K562 (cell line): ENCODE measurements at regions of chr1 and their contacts with region 1.

Region 1: GRCh38 chr1:3775490-3776230 is 3.1 kb downstream of the SMIM1 start:
- DNase-seq: peak; percentile 85 to 98 (median 91)
- ATAC-seq: peak; percentile 71
- H3K4me3 ChIP-seq: peak overlapping the region; percentile 7; the same call in 1 of the 2 replicates
- H3K27ac ChIP-seq: peak overlapping the region; percentile 66
- H3K4me1 ChIP-seq: peaks cover 26 to 87% of the 10 kb centered on the region in 2 experiments
- H3K27me3 ChIP-seq: no peaks in the 10 kb centered on the region
- CTCF ChIP-seq: peak; percentile 66 to 79 (median 69)
- EP300 ChIP-seq: no peak; the same call in 1 of the 2 replicates
- POLR2A ChIP-seq: peak; percentile 47; the same call in 1 of the 2 replicates
- RAD21 ChIP-seq: peak; percentile 15 to 66; a peak in 3 of 4 replicates

Region 2: GRCh38 chr1:3746830-3747521 is 28.7 kb before region 1 on chr1:
- CTCF ChIA-PET with region 1: no interaction called
- POLR2A ChIA-PET with region 1: no interaction called
- in situ Hi-C with region 1: no loop called
- intact Hi-C with region 1: loop called (anchors 2 kb)
- DNase-seq: peak; percentile 95 to 99 (median 98)
- ATAC-seq: peak; percentile 97
- H3K4me3 ChIP-seq: peak overlapping the region; percentile 72
- H3K27ac ChIP-seq: peak overlapping the region; percentile 47
- H3K4me1 ChIP-seq: peaks cover 35 to 58% of the 10 kb centered on the region in 2 experiments
- H3K27me3 ChIP-seq: no peaks in the 10 kb centered on the region
- CTCF ChIP-seq: no peak
- EP300 ChIP-seq: no peak
- POLR2A ChIP-seq: peak; percentile 80
- RAD21 ChIP-seq: no peak

Region 3: DNA sequence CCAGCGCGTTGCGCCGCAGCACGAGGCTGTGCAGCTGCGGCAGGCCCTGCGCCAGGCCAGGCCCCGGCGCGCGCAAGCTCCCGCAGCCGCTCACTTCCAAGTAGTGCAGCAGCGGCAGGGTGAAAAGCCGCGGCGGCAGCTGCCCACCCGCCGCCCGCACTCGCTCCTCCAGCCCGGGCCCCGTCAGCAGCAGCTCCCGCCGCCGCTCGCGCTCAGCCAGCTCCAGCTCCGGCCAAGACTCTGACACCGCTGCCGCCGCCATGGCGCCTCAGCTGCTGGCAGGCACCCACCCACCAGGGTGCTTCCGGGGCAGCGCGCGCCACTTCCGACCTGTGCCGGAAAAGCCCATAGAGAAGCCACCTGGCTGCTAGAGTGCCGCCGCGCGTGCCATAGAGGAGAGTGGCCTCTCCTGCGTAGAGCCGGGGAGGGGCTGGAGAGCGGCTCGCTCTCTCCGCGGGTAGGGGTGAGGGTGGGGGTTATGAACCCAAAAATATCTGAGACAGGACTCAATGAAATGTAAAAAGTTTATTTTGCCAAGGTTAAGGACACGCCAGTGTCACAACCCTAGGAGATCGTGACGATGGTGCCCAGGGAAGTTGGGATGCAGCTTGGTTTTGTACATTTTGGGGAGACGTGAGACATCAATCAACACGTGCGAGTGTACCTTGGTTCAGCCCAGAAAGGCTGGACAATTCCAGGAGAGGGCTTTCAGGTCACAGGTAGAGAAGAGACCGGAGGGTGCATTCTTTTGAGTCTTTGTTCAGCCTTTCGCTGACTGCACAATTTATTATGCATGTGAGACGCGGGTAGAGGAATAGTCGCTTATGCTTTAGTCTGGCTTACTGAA is 20.8 kb after region 1 on chr1 and contains the start of gene LRRC47:
- CTCF ChIA-PET with region 1: no interaction called
- POLR2A ChIA-PET with region 1: interaction called, 14 read pairs
- in situ Hi-C with region 1: no loop called
- intact Hi-C with region 1: no loop called
- DNase-seq: peak; percentile 95 to 98 (median 97)
- ATAC-seq: peak; percentile 98
- H3K4me3 ChIP-seq: peak within 1 kb of the TSS; percentile 82
- H3K27ac ChIP-seq: peak within 1 kb of the TSS; percentile 61
- H3K4me1 ChIP-seq: peaks cover 25 to 39% of the 10 kb centered on the region in 2 experiments
- H3K27me3 ChIP-seq: no peaks in the 10 kb centered on the region
- CTCF ChIP-seq: peak in 1 of 3 experiments; percentile 18; a peak in 1 of 6 replicates
- EP300 ChIP-seq: peak; percentile 68; the same call in 1 of the 2 replicates
- POLR2A ChIP-seq: peak; percentile 82
- RAD21 ChIP-seq: no peak
- polyA plus RNA-seq, gene LRRC47: 4.6 to 5.3 TPM

Region 4: DNA sequence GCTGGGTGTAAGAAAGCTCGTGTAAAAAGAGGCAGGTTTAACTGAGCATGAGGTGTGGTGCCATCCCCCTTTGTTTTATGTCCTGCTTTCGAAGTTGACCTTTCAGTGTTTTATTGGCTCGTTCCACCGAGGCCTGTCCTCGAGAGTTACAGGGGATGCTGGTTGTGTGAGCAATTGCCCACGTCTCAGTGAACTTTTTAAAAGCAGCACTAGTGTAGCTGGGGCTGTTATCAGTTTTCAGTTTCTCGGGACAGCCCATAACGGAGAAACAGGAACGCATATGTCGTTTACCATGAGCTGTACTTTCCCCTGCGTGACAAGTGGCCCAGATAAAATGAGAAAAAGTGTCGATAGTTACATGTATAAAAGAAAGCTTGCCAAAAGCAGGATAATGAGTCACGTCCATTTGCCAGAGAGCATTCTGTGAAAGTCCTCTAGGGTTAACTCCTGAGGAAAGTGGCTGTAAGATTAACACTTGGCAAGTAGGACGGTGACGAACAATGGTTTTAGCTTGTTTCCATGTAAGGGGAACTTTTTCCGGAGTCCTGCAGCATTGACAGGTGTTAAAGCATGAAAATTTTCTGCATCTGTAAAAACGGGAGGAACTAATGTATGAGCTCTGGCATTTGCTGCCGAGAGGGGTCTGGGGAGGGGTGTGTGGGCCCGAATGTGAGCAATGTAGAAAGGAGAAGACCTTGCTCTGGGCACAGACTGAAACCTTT is 28.4 kb after region 1 on chr1:
- CTCF ChIA-PET with region 1: no interaction called
- POLR2A ChIA-PET with region 1: interaction called, 3 read pairs
- in situ Hi-C with region 1: no loop called
- intact Hi-C with region 1: loop called (anchors 2 kb)
- DNase-seq: peak in 1 of 4 experiments; percentile 65
- ATAC-seq: peak; percentile 50
- H3K4me3 ChIP-seq: peak overlapping the region; percentile 6; the same call in 1 of the 2 replicates
- H3K27ac ChIP-seq: peak overlapping the region; percentile 76
- H3K4me1 ChIP-seq: peaks cover 13 to 32% of the 10 kb centered on the region in 2 experiments
- H3K27me3 ChIP-seq: no peaks in the 10 kb centered on the region
- CTCF ChIP-seq: no peak
- EP300 ChIP-seq: no peak
- POLR2A ChIP-seq: no peak
- RAD21 ChIP-seq: no peak

Region 5: DNA sequence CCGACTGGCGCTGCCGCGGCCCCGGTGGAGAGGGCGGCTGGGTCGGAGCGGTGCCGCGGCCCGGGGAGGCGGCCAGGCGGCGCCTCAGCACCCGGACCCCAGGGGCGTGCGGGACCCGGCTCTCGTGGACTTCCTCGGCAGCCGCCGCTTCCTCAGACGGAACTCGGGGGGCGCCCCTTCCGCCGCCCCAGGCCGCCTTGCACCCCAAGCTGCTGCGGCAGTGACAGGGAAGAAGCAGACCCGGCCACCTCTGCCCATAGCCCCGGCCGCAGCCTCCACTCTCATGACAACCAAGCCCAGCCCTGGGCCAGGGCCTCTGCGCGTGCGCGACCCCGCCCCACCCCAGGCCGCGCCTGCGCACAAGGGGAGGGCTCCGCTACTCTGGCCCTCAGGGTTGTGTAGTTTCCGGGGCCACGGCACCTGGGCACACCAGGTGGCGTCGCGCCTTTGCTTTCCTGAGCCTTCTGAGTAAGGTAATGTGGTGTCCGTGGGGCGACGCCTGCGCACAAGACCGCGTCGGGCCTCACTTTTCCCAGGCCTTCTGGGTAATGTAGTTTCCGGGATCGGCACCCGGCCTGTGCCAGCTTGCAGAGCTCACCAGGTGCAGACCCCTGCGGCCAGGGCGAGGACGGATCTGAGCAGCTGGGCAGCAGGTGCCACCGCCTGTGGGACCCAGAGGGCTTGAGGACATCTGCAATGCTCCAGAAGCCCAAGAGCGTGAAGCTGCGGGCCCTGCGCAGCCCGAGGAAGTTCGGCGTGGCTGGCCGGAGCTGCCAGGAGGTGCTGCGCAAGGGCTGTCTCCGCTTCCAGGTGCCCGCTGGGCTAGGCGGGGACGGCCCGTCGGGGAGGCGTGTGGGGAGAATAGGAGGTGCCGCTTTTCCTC is 81.5 kb after region 1 on chr1 and contains the starts of genes CEP104 and DFFB:
- CTCF ChIA-PET with region 1: no interaction called
- POLR2A ChIA-PET with region 1: no interaction called
- in situ Hi-C with region 1: no loop called
- intact Hi-C with region 1: loop called (anchors 5 kb)
- DNase-seq: peak; percentile 100
- ATAC-seq: peak; percentile 98
- H3K4me3 ChIP-seq: peak within 1 kb of the TSS; percentile 90
- H3K27ac ChIP-seq: peak within 1 kb of the TSS; percentile 68
- H3K4me1 ChIP-seq: peaks cover 10 to 37% of the 10 kb centered on the region in 2 experiments; a peak in 3 of 5 replicates
- H3K27me3 ChIP-seq: no peaks in the 10 kb centered on the region
- CTCF ChIP-seq: peak; percentile 72 to 91 (median 85)
- EP300 ChIP-seq: no peak
- POLR2A ChIP-seq: peak; percentile 79
- RAD21 ChIP-seq: peak; percentile 53 to 76
- polyA plus RNA-seq, gene CEP104: 11.2 to 13.4 TPM
- polyA plus RNA-seq, gene DFFB: 2.3 to 6.6 TPM